GM12878 (cell line): ENCODE measurements at regions of chr2 and their contacts with region 1.

Region 1: GRCh38 chr2:191818725-191819350 is 28.1 kb downstream of the CAVIN2 start:
- DNase-seq: no peak
- ATAC-seq: no peak
- H3K4me3 ChIP-seq: no peak overlapping the region
- H3K27ac ChIP-seq: no peak overlapping the region
- H3K4me1 ChIP-seq: no peaks in the 10 kb centered on the region
- H3K27me3 ChIP-seq: peaks cover 7% of the 10 kb centered on the region in 2 experiments; a peak in 3 of 4 replicates
- CTCF ChIP-seq: no peak
- EP300 ChIP-seq: no peak
- POLR2A ChIP-seq: no peak
- RAD21 ChIP-seq: no peak

Region 2: GRCh38 chr2:191806396-191806795 is 12.4 kb before region 1 on chr2:
- CTCF ChIA-PET with region 1: no interaction called
- POLR2A ChIA-PET with region 1: no interaction called
- RAD21 ChIA-PET with region 1: no interaction called
- SMC1A ChIA-PET with region 1: interaction called, 12 read pairs
- in situ Hi-C with region 1: no loop called
- intact Hi-C with region 1: no loop called
- DNase-seq: no peak
- ATAC-seq: peak; percentile 25; the same call in 2 of the 3 replicates
- H3K4me3 ChIP-seq: no peak overlapping the region
- H3K27ac ChIP-seq: no peak overlapping the region
- H3K4me1 ChIP-seq: no peaks in the 10 kb centered on the region
- H3K27me3 ChIP-seq: no peaks in the 10 kb centered on the region; a peak in 1 of 4 replicates
- CTCF ChIP-seq: no peak
- EP300 ChIP-seq: no peak
- POLR2A ChIP-seq: no peak
- RAD21 ChIP-seq: no peak